ENCODE measurements at regions of chr12 and their contacts with region 1.

Region 1: DNA sequence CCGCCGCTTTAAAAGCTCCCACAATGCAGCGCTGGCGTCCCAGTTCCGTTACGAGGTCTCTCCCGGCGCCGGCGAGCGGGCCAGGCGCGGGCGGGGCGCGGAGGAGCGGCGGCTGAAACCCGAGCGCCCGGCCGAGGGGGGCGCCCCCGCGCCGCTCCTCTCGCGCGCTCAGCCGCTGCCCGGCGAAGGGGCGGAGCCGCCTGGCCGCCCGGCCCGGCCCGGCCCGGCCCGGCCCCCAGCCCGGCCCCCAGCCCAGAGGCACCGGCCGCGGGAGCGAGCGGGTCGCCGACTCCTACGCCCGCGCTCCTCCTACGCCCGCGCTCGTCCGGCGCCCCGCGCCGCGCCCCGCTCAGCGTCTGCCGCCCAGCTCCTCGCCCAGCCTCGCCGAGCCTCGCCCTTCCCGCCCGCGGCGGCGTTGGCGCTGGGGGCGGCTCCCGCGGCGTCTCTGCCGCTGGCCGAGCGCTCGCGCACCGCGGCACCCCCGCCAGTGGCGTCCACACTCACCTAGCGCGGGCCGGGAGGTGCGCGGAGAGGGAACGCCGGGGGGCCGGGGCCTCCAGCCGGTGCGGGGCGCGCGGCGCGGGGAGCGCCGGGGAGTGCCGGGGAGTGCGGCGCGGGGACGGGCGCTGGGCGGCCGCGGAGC is at the start of gene RASSF8:
- DNase-seq: peak; percentile 35 to 87
- H3K4me3 ChIP-seq: peak within 1 kb of the TSS; percentile 84
- H3K27ac ChIP-seq: peak within 1 kb of the TSS; percentile 58
- H3K4me1 ChIP-seq: peaks cover 26% of the 10 kb centered on the region
- H3K27me3 ChIP-seq: no peaks in the 10 kb centered on the region
- CTCF ChIP-seq: no peak
- total RNA-seq, gene RASSF8: 26.5 and 30.6 TPM in 2 replicates

Region 2: GRCh38 chr12:25436203-25437030 is 522.1 kb before region 1 on chr12:
- CTCF ChIA-PET with region 1: no interaction called
- POLR2A ChIA-PET with region 1: no interaction called
- intact Hi-C with region 1: loop called (anchors 5 kb)
- DNase-seq: peak; percentile 44 to 58
- H3K4me3 ChIP-seq: peak overlapping the region; percentile 45; the same call in 1 of the 2 replicates
- H3K27ac ChIP-seq: no peak overlapping the region
- H3K4me1 ChIP-seq: no peaks in the 10 kb centered on the region
- H3K27me3 ChIP-seq: no peaks in the 10 kb centered on the region
- CTCF ChIP-seq: peak; percentile 93

Region 3: DNA sequence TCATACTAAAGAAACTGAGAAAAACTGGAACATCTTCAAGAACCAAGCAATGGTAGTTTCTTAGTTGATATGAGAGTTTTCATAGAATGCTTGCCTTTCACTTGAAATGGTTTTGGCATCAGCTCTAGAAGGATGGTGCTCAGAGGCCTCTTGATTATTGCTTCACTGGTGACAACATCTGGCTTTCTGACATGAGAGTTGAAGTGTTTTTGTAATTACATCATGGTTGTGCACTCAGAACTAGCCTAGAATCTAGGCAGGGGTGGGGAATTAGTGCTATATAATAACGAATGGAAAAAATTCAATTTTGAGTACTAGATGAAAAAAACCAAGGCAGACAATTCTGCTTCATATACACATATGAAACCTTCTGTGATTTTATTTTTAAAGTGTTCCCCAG is 232.6 kb before region 1 on chr12:
- CTCF ChIA-PET with region 1: no interaction called
- POLR2A ChIA-PET with region 1: no interaction called
- intact Hi-C with region 1: no loop called
- DNase-seq: no peak
- H3K4me3 ChIP-seq: no peak overlapping the region
- H3K27ac ChIP-seq: no peak overlapping the region
- H3K4me1 ChIP-seq: no peaks in the 10 kb centered on the region
- H3K27me3 ChIP-seq: no peaks in the 10 kb centered on the region
- CTCF ChIP-seq: no peak

Region 4: DNA sequence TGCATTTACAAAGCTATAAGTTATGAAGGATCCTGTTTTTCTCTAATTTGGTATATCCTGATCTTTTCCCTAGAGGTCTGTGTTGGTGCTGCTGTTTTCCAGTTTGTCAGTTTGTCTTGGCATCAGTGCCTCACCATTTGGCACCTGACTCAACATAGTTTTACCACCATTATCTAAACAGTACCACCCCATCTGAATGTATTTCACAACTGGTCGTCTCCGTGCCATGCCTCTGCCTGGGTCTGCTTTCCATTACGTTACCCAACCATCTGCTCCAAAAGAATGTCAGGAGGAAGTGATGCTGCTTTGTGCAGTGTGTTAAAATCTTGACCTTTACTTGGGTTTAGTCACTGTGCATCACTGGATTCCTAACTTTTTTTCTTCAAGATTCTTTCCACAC is 129.4 kb before region 1 on chr12:
- CTCF ChIA-PET with region 1: no interaction called
- POLR2A ChIA-PET with region 1: no interaction called
- intact Hi-C with region 1: loop called (anchors 2 kb)
- DNase-seq: peak; percentile 63 to 95
- H3K4me3 ChIP-seq: no peak overlapping the region
- H3K27ac ChIP-seq: peak overlapping the region; percentile 59
- H3K4me1 ChIP-seq: peaks cover 21% of the 10 kb centered on the region
- H3K27me3 ChIP-seq: no peaks in the 10 kb centered on the region
- CTCF ChIP-seq: no peak

Region 5: GRCh38 chr12:26011099-26011498 is 52.5 kb after region 1 on chr12:
- CTCF ChIA-PET with region 1: no interaction called
- POLR2A ChIA-PET with region 1: no interaction called
- intact Hi-C with region 1: loop called (anchors 5 kb)
- DNase-seq: no peak
- H3K4me3 ChIP-seq: no peak overlapping the region
- H3K27ac ChIP-seq: no peak overlapping the region
- H3K4me1 ChIP-seq: no peaks in the 10 kb centered on the region
- H3K27me3 ChIP-seq: no peaks in the 10 kb centered on the region
- CTCF ChIP-seq: no peak

Region 6: GRCh38 chr12:26113853-26114719 is 155.5 kb after region 1 on chr12:
- CTCF ChIA-PET with region 1: no interaction called
- POLR2A ChIA-PET with region 1: no interaction called
- intact Hi-C with region 1: loop called (anchors 5 kb)
- DNase-seq: peak; percentile 91 to 92
- H3K4me3 ChIP-seq: peak overlapping the region; percentile 57
- H3K27ac ChIP-seq: peak overlapping the region; percentile 93
- H3K4me1 ChIP-seq: peaks cover 61% of the 10 kb centered on the region
- H3K27me3 ChIP-seq: no peaks in the 10 kb centered on the region
- CTCF ChIP-seq: peak; percentile 46

Region 7: GRCh38 chr12:26651566-26652188 is 693.1 kb after region 1 on chr12:
- CTCF ChIA-PET with region 1: no interaction called
- POLR2A ChIA-PET with region 1: no interaction called
- intact Hi-C with region 1: loop called (anchors 5 kb)
- DNase-seq: peak; percentile 67 to 77
- H3K4me3 ChIP-seq: no peak overlapping the region
- H3K27ac ChIP-seq: no peak overlapping the region
- H3K4me1 ChIP-seq: peaks cover 12% of the 10 kb centered on the region; the same call in 1 of the 2 replicates
- H3K27me3 ChIP-seq: no peaks in the 10 kb centered on the region
- CTCF ChIP-seq: peak; percentile 97